Activated CD8-positive, alpha-beta T cell treated with anti-CD3 and anti-CD28 coated beads, Interleukin-2, amount 10 ng/mL, durations not matched to agents 7 days and 5 days (primary cell): ENCODE measurements at regions of chr7 and their contacts with region 1.

Region 1: DNA sequence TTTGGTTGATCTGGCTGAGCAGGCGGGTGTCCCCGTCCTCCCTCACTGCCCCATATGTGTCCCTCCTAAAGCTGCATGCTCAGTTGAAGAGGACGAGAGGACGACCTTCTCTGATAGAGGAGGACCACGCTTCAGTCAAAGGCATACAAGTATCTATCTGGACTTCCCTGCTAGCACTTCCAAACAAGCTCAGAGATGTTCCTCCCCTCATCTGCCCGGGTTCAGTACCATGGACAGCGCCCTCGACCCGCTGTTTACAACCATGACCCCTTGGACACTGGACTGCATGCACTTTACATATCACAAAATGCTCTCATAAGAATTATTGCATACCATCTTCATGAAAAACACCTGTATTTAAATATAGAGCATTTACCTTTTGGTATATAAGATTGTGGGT is 26.9 kb upstream of the TRIM56 start:
- DNase-seq: peak; percentile 74
- ATAC-seq: no peak
- H3K4me3 Mint-ChIP-seq: no peak overlapping the region
- H3K27ac Mint-ChIP-seq: no peak overlapping the region
- H3K4me1 Mint-ChIP-seq: no peaks in the 10 kb centered on the region
- H3K27me3 Mint-ChIP-seq: peaks cover 16% of the 10 kb centered on the region

Region 2: DNA sequence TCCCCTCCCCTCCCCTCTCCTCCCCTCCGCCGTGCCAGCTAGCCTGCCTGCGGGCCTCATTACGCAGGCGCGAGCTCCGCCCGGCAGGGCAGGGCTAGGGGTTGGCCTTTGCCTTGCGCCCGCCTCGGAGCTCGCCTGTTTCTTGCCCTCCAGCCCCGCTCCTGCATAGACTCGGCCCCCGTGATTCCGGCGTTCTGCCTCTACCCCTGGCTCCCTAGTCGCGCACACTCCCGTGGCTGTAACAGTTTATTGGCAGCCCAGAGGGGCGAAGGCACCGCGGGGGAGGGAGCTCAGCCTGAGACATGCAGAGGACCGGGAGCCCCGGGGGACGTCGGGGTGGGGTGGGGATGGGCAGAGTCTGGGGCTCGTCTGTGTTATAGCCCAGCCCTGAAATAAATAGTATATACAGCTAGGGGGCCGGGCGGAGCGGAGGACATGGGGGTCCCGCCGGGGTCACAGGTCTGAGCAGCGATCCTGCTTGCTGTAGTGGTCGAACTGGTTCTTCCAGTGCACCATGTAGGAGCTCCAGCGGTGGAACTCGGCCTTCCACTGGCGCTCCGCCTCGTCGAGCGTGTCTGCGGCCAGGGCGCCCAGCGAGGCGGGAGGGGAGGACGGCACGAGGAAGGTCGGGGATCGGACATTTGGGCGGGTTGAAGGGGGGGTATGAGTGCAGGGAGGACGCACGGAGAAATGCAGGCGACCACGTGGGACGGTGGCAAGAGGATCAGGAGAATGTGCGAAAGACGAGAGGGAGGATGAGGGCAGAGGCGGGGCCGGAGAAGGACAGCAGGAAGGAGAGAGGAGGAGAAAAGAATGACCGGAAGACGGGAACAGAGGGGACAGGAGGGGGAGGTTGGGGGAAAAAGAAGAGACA is 168.4 kb before region 1 on chr7:
- CTCF ChIA-PET with region 1: interaction called, 13 read pairs
- POLR2A ChIA-PET with region 1: interaction called, 4 read pairs
- DNase-seq: peak; percentile 93
- ATAC-seq: peak; percentile 92
- H3K4me3 Mint-ChIP-seq: peak overlapping the region; percentile 82
- H3K27ac Mint-ChIP-seq: peak overlapping the region; percentile 77
- H3K4me1 Mint-ChIP-seq: peaks cover 46% of the 10 kb centered on the region
- H3K27me3 Mint-ChIP-seq: peaks cover 22% of the 10 kb centered on the region

Region 3: DNA sequence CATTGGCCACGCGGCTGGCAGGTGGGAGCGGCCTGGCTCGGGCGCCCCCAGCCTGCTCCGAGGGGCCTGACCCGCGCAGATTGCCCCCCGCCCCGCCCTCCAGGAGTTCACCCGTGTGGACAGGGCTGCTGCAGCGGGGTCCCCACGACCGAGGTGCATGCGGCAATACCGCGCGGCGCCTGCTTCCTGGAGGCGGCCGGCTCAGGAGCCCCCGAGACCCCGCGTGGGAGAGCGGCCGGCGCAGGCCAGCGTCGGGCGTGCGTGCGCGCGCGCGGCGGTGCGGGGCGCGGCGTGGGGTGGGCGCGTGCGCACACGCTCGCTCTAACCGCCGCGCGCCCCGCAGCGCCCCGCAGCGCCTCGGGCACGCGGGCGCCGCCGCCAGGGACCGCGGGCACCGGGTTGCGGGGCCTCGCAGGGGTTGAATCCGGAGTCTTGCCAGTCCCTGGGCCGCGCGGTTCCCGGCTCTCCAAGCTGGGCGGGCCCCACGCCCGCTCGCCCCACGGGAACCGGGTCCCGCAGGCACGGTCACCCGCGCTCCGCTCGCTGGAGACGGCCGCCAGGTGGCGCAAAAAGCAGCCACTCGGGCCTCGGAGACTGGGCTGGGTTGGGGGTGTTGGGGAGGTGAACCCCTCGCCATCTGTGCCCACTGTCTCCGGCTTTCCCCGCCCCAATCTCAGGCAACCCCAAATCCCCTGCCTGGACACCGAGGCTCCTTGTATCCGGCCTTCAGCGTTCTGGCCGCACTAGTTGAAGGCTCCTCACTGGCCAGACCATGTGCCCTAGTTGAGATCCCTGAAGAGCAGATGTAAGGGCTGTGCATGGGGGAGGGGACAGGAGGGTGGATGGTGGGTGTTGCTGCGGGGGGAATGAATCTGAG is 161.4 kb before region 1 on chr7:
- CTCF ChIA-PET with region 1: interaction called, 14 read pairs
- POLR2A ChIA-PET with region 1: interaction called, 4 read pairs
- DNase-seq: peak; percentile 64
- ATAC-seq: peak; percentile 72
- H3K4me3 Mint-ChIP-seq: no peak overlapping the region
- H3K27ac Mint-ChIP-seq: no peak overlapping the region
- H3K4me1 Mint-ChIP-seq: peaks cover 7% of the 10 kb centered on the region
- H3K27me3 Mint-ChIP-seq: peaks cover 32% of the 10 kb centered on the region

Region 4: GRCh38 chr7:101138213-101138870 is 80.0 kb after region 1 on chr7:
- CTCF ChIA-PET with region 1: no interaction called
- POLR2A ChIA-PET with region 1: no interaction called
- DNase-seq: peak; percentile 91
- ATAC-seq: peak; percentile 90
- H3K4me3 Mint-ChIP-seq: peak overlapping the region; percentile 54
- H3K27ac Mint-ChIP-seq: peak overlapping the region; percentile 82
- H3K4me1 Mint-ChIP-seq: peaks cover 47% of the 10 kb centered on the region
- H3K27me3 Mint-ChIP-seq: peaks cover 16% of the 10 kb centered on the region